GM10248 (cell line): ENCODE measurements at regions of chr10 and their contacts with region 1.

Region 1: DNA sequence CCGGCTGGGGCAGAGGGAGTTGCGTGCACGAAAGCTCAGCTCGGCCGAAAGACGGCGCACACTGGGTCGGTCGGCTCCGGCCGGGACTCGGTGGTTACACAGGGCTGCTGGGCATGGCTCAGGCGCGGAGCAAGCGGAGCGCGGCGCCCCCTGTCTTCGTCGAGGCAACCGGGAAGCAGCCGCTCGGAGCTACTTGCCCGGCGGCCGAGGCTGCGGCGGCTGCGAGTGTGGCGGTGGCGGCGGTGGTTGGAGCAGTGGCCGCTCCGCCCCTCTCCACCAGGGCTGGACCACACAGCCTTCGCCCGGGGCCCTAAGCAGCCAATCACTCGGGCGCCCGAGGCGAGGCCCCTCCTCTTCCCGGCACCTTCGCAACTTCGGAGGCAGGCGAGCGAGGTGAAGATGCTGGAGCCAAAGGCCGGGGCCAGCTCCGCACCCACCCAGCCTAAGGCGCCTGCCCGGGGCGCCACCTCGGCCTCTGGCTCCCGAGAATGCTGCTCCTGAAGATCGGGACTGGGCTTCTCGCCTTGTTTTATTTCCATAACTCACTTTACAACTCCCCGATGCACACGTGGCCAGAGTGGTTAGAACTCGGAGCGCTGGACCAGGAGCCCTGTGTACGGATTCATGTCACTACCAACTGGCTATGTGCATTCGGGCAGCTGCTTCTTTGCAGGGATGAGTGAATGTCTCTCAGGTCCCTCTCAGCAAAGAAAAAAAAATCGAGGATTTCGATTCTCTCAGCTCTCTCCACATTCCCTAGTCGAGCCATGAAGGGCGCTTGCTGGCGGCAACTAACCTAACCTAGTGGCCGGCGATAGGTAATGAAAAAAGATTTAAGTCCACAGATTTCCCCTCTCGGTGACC is at the start of gene TLL2:
- DNase-seq: peak; percentile 89
- CTCF ChIP-seq: peak; percentile 53

Region 2: DNA sequence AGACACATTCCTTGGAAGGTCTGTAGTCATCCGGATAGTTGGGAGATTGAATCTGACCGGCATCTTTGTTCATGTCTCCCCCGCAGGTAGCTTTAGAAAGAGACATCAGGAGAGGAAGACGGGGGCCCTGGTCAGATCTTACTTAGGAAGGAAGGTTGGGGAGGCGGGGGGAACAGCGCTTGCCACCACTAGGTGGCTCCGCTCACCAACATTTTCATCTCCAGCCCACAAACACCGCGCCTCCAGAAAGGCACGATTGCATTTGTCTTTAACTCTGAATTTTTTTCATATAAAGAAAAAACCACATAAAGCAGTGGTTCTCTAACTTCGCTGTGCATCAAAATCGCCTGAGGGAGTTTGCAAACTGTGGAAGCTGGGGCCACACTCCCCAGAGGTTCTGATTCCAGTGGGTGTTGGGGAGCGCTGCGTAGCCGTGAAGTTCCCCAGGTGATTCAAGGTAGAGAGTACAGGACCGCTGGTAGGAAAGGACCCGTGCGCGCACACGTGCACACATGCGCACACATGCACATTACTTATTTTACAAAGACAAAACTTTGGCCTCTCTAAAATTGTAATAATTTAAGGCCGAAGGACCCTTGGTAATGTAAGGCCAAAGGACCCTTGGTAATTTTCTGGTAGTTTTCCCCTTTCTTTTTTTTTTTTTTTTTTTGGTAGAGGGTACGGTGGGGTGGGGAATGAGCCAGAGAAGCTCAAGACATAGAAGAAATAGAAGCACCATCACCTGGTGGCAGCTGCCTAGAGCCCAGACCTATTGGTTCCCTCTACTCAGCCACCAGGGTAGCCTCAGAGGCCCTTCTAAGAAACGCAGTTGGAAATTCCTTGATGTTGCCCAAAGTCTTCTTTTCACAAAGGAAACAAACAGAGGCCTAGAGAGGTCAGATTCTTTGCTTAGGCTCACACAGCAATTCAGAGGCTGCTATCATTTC is 117.7 kb before region 1 on chr10:
- CTCF ChIA-PET with region 1: interaction called, 13 read pairs
- POLR2A ChIA-PET with region 1: no interaction called
- DNase-seq: peak; percentile 86
- CTCF ChIP-seq: peak; percentile 83

Region 3: GRCh38 chr10:96491299-96491698 is 22.6 kb before region 1 on chr10:
- CTCF ChIA-PET with region 1: interaction called, 22 read pairs
- POLR2A ChIA-PET with region 1: no interaction called
- DNase-seq: no peak
- CTCF ChIP-seq: peak; percentile 34

Region 4: GRCh38 chr10:96501985-96502384 is 11.9 kb before region 1 on chr10:
- CTCF ChIA-PET with region 1: interaction called, 16 read pairs
- POLR2A ChIA-PET with region 1: no interaction called
- DNase-seq: peak; percentile 2
- CTCF ChIP-seq: no peak

Region 5: GRCh38 chr10:96524741-96525140 is 10.8 kb after region 1 on chr10:
- CTCF ChIA-PET with region 1: interaction called, 12 read pairs
- POLR2A ChIA-PET with region 1: no interaction called
- DNase-seq: no peak
- CTCF ChIP-seq: no peak